Esophagus muscularis mucosa (tissue), 4 donors: ENCODE measurements at regions of chr21 and their contacts with region 1.

Region 1: GRCh38 chr21:29477941-29478340 is 179.2 kb downstream of the BACH1 start:
- DNase-seq: no peak
- H3K4me3 ChIP-seq: no peak overlapping the region
- H3K27ac ChIP-seq: no peak overlapping the region
- H3K4me1 ChIP-seq: peaks cover 0 to 11% (median 6%) of the 10 kb centered on the region in 4 donors
- H3K27me3 ChIP-seq: no peaks in the 10 kb centered on the region
- CTCF ChIP-seq: no peak
- EP300 ChIP-seq: no peak
- POLR2A ChIP-seq: no peak

Region 2: GRCh38 chr21:29384683-29385322 is 93.1 kb before region 1 on chr21:
- intact Hi-C with region 1: no loop called
- DNase-seq: no peak
- H3K4me3 ChIP-seq: no peak overlapping the region
- H3K27ac ChIP-seq: no peak overlapping the region
- H3K4me1 ChIP-seq: no peaks in the 10 kb centered on the region
- H3K27me3 ChIP-seq: no peaks in the 10 kb centered on the region
- CTCF ChIP-seq: no peak
- EP300 ChIP-seq: no peak
- POLR2A ChIP-seq: no peak

Region 3: DNA sequence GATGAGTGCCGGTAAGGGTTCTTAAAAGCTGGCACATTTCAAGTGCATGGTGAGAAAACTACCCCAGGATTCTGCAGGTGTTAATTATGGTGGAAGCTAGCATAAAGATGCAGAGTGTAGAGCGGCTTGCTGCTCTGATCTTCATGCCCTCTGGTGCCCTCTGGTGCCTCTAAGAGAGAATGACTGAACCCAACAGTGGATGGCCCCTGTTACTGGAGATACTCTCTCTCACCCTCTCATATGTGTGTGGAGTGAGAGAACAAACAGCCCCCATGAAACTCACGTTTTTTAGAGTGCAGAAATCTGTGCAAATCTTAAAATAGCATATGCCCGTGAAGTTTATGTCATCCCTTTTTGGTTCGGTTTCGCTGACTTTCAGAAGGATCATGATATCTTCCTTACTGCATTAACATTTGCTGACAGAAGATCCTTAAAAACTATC is 371.8 kb after region 1 on chr21:
- intact Hi-C with region 1: loop called (anchors 2 kb)
- DNase-seq: no peak
- H3K4me3 ChIP-seq: no peak overlapping the region
- H3K27ac ChIP-seq: no peak overlapping the region
- H3K4me1 ChIP-seq: no peaks in the 10 kb centered on the region
- H3K27me3 ChIP-seq: no peaks in the 10 kb centered on the region
- CTCF ChIP-seq: peak; percentile 48 to 68 (median 55)
- EP300 ChIP-seq: no peak
- POLR2A ChIP-seq: no peak